ENCODE measurements at regions of chr3 and their contacts with region 1.

Region 1: GRCh38 chr3:36993326-36994283 is at the start of gene MLH1:
- DNase-seq: peak; percentile 90
- ATAC-seq: peak; percentile 86
- H3K4me3 Mint-ChIP-seq: no peak within 1 kb of the TSS
- H3K27ac Mint-ChIP-seq: no peak within 1 kb of the TSS
- H3K4me1 Mint-ChIP-seq: peaks cover 29% of the 10 kb centered on the region
- H3K27me3 Mint-ChIP-seq: no peaks in the 10 kb centered on the region
- CTCF ChIP-seq: no peak
- total RNA-seq, gene MLH1: 45.8 and 46.2 TPM in 2 replicates

Region 2: DNA sequence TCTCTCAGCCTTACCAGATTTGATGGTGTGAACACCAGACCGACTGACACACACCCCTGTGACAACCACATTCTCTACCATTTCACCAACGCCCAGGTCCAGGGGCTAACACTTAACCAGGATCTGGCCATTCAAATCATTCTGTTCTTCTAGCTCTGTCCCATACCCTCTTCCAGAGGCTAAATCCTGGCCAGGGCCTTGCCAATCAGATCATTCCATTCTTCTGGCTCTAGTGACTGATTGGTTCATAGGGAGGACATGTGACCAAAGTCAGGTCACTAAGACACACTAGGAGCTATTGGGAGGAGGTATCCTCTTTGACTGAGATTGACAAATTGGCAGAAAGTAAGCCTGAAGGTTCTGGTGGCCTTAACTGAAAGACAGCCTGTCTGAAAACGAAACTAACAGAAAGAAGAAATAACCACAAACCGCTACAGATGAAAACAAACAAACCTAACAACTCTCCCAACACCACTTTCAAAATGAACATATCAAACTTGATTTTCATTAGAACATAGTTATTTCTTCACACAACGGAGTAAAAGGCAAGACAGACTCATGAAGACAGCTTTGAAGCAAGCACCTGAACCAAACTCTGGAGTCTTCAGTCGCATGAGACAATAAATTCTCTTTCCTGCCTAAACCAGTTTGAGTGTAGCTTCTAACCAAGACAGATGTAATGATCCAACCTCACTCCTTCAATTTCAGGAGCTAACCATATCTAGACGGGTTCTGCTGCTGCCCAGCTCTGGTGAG is 117.2 kb before region 1 on chr3:
- CTCF ChIA-PET with region 1: no interaction called
- POLR2A ChIA-PET with region 1: interaction called, 20 read pairs
- intact Hi-C with region 1: no loop called
- DNase-seq: no peak
- ATAC-seq: peak; percentile 85
- H3K4me3 Mint-ChIP-seq: peak overlapping the region; percentile 75
- H3K27ac Mint-ChIP-seq: peak overlapping the region; percentile 96
- H3K4me1 Mint-ChIP-seq: peaks cover 55% of the 10 kb centered on the region
- H3K27me3 Mint-ChIP-seq: no peaks in the 10 kb centered on the region
- CTCF ChIP-seq: no peak

Region 3: GRCh38 chr3:36904641-36905040 is 89.0 kb before region 1 on chr3:
- CTCF ChIA-PET with region 1: no interaction called
- POLR2A ChIA-PET with region 1: interaction called, 12 read pairs
- intact Hi-C with region 1: no loop called
- DNase-seq: no peak
- ATAC-seq: no peak
- H3K4me3 Mint-ChIP-seq: peak overlapping the region; percentile 55
- H3K27ac Mint-ChIP-seq: peak overlapping the region; percentile 74
- H3K4me1 Mint-ChIP-seq: peaks cover 88% of the 10 kb centered on the region
- H3K27me3 Mint-ChIP-seq: no peaks in the 10 kb centered on the region
- CTCF ChIP-seq: no peak

Region 4: GRCh38 chr3:36923523-36923943 is 70.1 kb before region 1 on chr3:
- CTCF ChIA-PET with region 1: interaction called, 4 read pairs
- POLR2A ChIA-PET with region 1: interaction called, 12 read pairs
- intact Hi-C with region 1: no loop called
- DNase-seq: no peak
- ATAC-seq: no peak
- H3K4me3 Mint-ChIP-seq: peak overlapping the region; percentile 85
- H3K27ac Mint-ChIP-seq: peak overlapping the region; percentile 87
- H3K4me1 Mint-ChIP-seq: peaks cover 60% of the 10 kb centered on the region
- H3K27me3 Mint-ChIP-seq: no peaks in the 10 kb centered on the region
- CTCF ChIP-seq: no peak

Region 5: DNA sequence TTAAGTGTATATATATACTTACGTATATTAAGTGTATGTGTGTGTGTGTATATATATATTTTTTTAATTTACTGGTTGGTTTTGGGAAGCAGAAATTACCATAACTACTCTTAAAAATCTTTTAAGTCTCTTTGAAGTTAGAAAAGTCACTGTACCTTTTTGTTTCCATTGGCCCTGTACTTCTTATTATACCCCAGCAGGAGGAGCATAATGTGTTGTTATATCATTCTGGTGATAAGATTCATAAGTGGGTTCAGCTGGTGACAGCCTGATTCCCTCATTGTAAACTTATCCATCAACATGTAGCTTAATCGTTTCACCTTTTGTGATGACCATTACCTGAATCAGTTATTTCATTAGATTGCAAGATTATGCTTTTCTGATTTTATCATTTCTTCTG is 30.5 kb after region 1 on chr3:
- CTCF ChIA-PET with region 1: no interaction called
- POLR2A ChIA-PET with region 1: interaction called, 17 read pairs
- intact Hi-C with region 1: no loop called
- DNase-seq: no peak
- ATAC-seq: peak; percentile 42
- H3K4me3 Mint-ChIP-seq: no peak overlapping the region
- H3K27ac Mint-ChIP-seq: no peak overlapping the region
- H3K4me1 Mint-ChIP-seq: peaks cover 7% of the 10 kb centered on the region
- H3K27me3 Mint-ChIP-seq: no peaks in the 10 kb centered on the region
- CTCF ChIP-seq: no peak

Measured in activated B cell treated with CpG ODN at 0.5 μM for 24 hours (primary cell).